ENCODE measurements at regions of chr10 and their contacts with region 1.

Region 1: GRCh38 chr10:30284865-30285594 is 64.0 kb downstream of the MTPAP start:
- DNase-seq: peak in 1 of 2 experiments; percentile 8
- H3K4me3 ChIP-seq: no peak overlapping the region
- H3K27ac ChIP-seq: no peak overlapping the region
- H3K4me1 ChIP-seq: no peaks in the 10 kb centered on the region
- H3K27me3 ChIP-seq: no peaks in the 10 kb centered on the region
- CTCF ChIP-seq: no peak

Region 2: DNA sequence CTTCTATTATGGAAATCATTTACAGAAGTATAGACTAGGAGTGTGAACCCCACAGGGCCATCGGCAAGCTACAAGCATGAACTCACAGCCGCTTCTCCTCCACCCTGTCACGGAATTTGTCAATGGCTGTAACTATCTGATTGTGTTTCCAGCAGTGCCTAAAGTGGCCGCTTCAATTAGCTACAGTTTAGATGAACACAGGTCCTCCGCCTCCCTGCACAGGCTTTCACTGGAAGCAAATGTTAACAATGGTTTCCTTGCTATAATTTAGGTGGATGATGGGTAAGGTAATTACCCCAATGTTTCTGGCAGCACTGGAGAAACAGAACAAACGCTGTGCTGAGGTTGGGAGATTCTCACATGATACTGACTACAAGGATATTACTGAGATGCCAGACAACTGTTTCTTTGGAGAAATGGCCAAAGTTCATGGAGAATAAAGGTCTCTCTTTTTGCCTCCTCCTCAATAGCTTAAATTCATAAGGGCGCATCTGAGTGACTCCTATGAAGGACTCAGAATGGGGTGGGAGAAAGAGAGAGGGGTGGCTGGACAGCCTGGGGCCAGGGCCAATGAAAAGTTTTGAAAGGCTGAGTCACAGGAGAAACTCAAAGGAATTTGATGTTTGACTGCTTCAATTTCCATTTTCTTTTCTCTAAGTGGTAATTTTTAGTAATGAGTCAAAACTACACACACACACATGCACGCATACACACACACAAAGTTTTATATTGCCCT is 729.1 kb before region 1 on chr10:
- CTCF ChIA-PET with region 1: no interaction called
- POLR2A ChIA-PET with region 1: interaction called, 14 read pairs
- intact Hi-C with region 1: no loop called
- DNase-seq: no peak
- H3K4me3 ChIP-seq: no peak overlapping the region
- H3K27ac ChIP-seq: no peak overlapping the region
- H3K4me1 ChIP-seq: 0 out of 2 replicates have a peak, but pooled peaks cover 5% of the 10 kb centered on the region
- H3K27me3 ChIP-seq: no peaks in the 10 kb centered on the region
- CTCF ChIP-seq: no peak

Measured in PC-9 (cell line).